ENCODE measurements at regions of chr18 and their contacts with region 1.

Region 1: GRCh38 chr18:27599202-27599829 is 414.2 kb upstream of the CHST9 start:
- DNase-seq: peak; percentile 65
- H3K4me3 Mint-ChIP-seq: no peak overlapping the region
- H3K27ac Mint-ChIP-seq: no peak overlapping the region
- H3K4me1 Mint-ChIP-seq: peaks cover under 1% of the 10 kb centered on the region
- H3K27me3 Mint-ChIP-seq: peaks cover 3% of the 10 kb centered on the region
- CTCF ChIP-seq: peak; percentile 81

Region 2: GRCh38 chr18:27378431-27379095 is 220.8 kb before region 1 on chr18:
- CTCF ChIA-PET with region 1: interaction called, 23 read pairs
- POLR2A ChIA-PET with region 1: no interaction called
- intact Hi-C with region 1: no loop called
- DNase-seq: peak; percentile 90
- H3K4me3 Mint-ChIP-seq: no peak overlapping the region
- H3K27ac Mint-ChIP-seq: peak overlapping the region; percentile 77
- H3K4me1 Mint-ChIP-seq: peaks cover 11% of the 10 kb centered on the region
- H3K27me3 Mint-ChIP-seq: no peaks in the 10 kb centered on the region
- CTCF ChIP-seq: no peak

Measured in MCF 10A (cell line).